ENCODE measurements at regions of chr6 and their contacts with region 1.

Region 1: DNA sequence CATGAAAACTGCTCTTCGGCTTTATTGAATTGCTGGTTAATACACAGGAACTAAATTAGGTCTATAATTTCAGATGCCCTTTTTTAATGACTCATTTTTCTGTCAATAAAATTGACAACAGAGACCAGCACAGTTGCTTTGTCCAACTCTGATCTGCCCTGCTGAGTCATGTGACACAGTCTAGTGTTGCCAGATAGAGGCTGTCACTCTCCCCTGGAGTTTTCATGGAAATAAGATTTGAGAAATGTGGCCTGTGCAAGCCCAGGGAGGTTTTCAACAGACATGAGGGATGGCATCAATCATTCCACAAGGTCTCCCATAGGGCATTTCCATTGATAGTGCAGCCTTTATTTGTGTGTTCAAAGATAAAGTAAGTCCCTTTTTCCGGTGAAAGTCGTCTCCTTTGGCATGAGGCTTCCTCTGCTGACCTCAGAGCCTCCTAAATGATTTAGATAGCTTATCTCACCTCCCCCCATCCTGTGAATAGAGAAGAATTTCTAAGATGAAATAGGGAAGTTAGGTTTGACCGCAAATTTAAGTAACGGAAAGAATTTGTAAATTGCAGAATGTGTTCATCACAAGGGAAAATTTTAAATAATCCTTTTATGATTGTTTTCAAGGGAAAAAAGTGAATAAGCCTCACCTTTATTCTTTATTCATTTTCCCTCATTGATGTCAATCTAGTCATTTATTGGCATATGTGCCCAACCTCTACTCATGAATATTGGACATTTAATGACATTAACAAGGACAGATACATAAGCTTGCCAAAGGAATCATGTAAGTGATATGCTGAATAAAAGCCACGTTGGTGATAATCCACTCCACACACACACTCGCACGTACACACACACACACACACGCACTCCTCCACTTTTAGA is 277.7 kb downstream of the ADGB start:
- DNase-seq: peak; percentile 79 to 98 (median 84)
- ATAC-seq: peak; percentile 88
- H3K4me3 ChIP-seq: no peak overlapping the region
- H3K27ac ChIP-seq: peak overlapping the region; percentile 96
- H3K4me1 ChIP-seq: peaks cover 36 to 68% of the 10 kb centered on the region in 2 experiments
- H3K27me3 ChIP-seq: no peaks in the 10 kb centered on the region
- CTCF ChIP-seq: 0 out of 6 replicates have a peak, but pooled peaks of 1 of the 3 experiments have one; percentile 1
- EP300 ChIP-seq: peak; percentile 100
- POLR2A ChIP-seq: no peak
- RAD21 ChIP-seq: peak; percentile 7 to 38; a peak in 3 of 4 replicates

Region 2: GRCh38 chr6:146578054-146578453 is 298.5 kb before region 1 on chr6:
- CTCF ChIA-PET with region 1: no interaction called
- POLR2A ChIA-PET with region 1: no interaction called
- in situ Hi-C with region 1: no loop called
- intact Hi-C with region 1: no loop called
- DNase-seq: no peak
- ATAC-seq: no peak
- H3K4me3 ChIP-seq: no peak overlapping the region
- H3K27ac ChIP-seq: no peak overlapping the region
- H3K4me1 ChIP-seq: no peaks in the 10 kb centered on the region
- H3K27me3 ChIP-seq: no peaks in the 10 kb centered on the region
- CTCF ChIP-seq: no peak
- EP300 ChIP-seq: no peak
- POLR2A ChIP-seq: no peak
- RAD21 ChIP-seq: no peak

Region 3: GRCh38 chr6:146865756-146866379 is 10.6 kb before region 1 on chr6:
- CTCF ChIA-PET with region 1: no interaction called
- POLR2A ChIA-PET with region 1: interaction called, 13 read pairs
- in situ Hi-C with region 1: no loop called
- intact Hi-C with region 1: no loop called
- DNase-seq: no peak
- ATAC-seq: peak; percentile 46
- H3K4me3 ChIP-seq: no peak overlapping the region
- H3K27ac ChIP-seq: peak overlapping the region; percentile 50
- H3K4me1 ChIP-seq: peaks cover 0 to 43% of the 10 kb centered on the region in 2 experiments
- H3K27me3 ChIP-seq: no peaks in the 10 kb centered on the region
- CTCF ChIP-seq: no peak
- EP300 ChIP-seq: no peak; the same call in 1 of the 2 replicates
- POLR2A ChIP-seq: no peak
- RAD21 ChIP-seq: peak in 1 of 2 experiments; percentile 2; a peak in 1 of 4 replicates

Region 4: GRCh38 chr6:146892613-146893401 is 16.3 kb after region 1 on chr6:
- CTCF ChIA-PET with region 1: no interaction called
- POLR2A ChIA-PET with region 1: interaction called, 3 read pairs
- in situ Hi-C with region 1: no loop called
- intact Hi-C with region 1: loop called (anchors 1 kb)
- DNase-seq: peak in 3 of 4 experiments; percentile 42 to 90 (median 83)
- ATAC-seq: peak; percentile 62
- H3K4me3 ChIP-seq: peak overlapping the region; percentile 36
- H3K27ac ChIP-seq: peak overlapping the region; percentile 65
- H3K4me1 ChIP-seq: peaks cover 39 to 96% of the 10 kb centered on the region in 2 experiments
- H3K27me3 ChIP-seq: no peaks in the 10 kb centered on the region
- CTCF ChIP-seq: no peak
- EP300 ChIP-seq: peak; percentile 88
- POLR2A ChIP-seq: peak; percentile 73
- RAD21 ChIP-seq: peak; percentile 3 to 36; a peak in 3 of 4 replicates

Region 5: DNA sequence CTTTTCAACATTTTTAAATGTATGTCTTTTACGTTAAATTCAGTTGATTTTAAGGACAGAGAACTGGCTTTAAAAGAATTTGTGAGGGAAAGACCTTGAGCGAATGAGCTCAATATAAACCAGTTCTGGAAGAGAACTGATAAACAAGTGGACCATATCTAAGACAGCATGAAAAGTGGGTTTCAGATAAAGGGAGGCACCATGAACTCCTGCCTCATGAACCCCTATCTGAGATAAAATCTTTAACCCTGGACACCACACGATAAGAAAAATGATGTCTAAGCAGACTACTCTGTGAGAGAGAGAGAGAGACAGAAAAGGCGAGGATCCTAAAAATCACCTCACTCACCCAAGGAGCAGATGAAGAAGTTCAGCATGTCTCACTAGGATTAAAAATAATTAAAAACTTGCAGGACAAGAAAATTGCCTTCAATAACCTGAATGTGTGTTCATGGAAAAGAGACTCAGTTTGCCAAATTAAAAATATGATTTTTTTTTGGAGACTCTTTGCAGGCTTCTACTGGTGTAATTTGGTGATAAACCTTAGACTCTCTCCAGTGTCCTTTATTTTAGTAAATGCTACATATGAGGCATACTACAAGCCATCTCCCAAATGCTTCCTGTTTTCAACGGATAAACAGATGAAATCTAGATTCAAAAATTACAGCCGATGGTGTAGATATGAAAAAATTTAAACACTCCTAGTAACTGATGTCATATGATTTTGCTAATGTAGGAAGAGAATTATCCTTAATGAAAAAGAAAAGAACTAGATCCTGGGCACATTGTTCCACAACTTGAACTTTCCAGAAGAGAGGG is 21.8 kb after region 1 on chr6:
- CTCF ChIA-PET with region 1: no interaction called
- POLR2A ChIA-PET with region 1: interaction called, 3 read pairs
- in situ Hi-C with region 1: no loop called
- intact Hi-C with region 1: loop called (anchors 1 kb)
- DNase-seq: peak; percentile 40 to 86 (median 62)
- ATAC-seq: peak; percentile 17
- H3K4me3 ChIP-seq: no peak overlapping the region
- H3K27ac ChIP-seq: peak overlapping the region; percentile 65
- H3K4me1 ChIP-seq: peaks cover 17 to 70% of the 10 kb centered on the region in 2 experiments
- H3K27me3 ChIP-seq: no peaks in the 10 kb centered on the region
- CTCF ChIP-seq: no peak
- EP300 ChIP-seq: peak; percentile 97
- POLR2A ChIP-seq: no peak
- RAD21 ChIP-seq: peak; percentile 17 to 36; a peak in 2 of 4 replicates